PC-3 (cell line): ENCODE measurements at regions of chr15 and their contacts with region 1.

Region 1: DNA sequence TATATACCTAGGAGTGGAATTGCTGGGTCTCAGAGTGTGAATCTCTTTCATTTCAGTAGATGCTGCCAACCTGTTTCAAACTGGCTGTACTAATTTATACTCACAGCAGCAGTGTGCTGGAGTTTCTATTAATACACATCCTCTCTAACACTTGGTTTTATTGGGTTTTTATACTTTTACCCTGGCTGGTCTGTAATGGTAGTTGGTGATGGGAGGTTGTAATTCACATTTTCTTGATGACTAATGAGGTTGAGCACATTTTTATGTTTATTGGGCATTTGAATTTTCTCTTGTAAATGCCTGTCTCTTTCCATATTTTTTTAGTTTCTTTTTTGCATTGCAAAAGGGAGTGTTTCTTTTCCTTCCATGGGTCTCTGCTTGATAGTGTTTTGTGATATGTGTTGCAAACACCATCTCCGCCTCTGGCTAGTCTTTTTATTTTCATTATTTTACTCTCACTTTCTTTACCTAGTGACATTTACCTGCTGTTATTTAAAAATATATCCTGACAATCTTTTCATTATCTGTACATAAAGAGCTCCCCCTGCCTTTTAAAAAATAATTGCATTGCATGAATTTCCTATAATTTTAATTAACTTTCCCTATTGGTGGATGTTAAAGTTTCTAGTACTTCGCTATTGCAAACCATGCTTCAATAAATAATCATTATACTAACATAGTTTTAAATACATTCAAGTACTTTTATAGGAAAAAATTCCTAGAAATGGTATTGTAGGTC is 49.0 kb upstream of the GCNT3 start:
- DNase-seq: no peak
- ATAC-seq: peak; percentile 35; the same call in 1 of the 2 replicates
- H3K4me3 ChIP-seq: no peak overlapping the region
- H3K27ac ChIP-seq: no peak overlapping the region
- H3K4me1 ChIP-seq: peaks cover 9% of the 10 kb centered on the region
- H3K27me3 ChIP-seq: no peaks in the 10 kb centered on the region
- CTCF ChIP-seq: peak; percentile 49; the same call in 1 of the 2 replicates

Region 2: GRCh38 chr15:59587068-59587826 is 24.6 kb after region 1 on chr15:
- CTCF ChIA-PET with region 1: no interaction called
- POLR2A ChIA-PET with region 1: interaction called, 3 read pairs
- intact Hi-C with region 1: loop called (anchors 2 kb)
- DNase-seq: peak; percentile 84
- ATAC-seq: peak; percentile 76
- H3K4me3 ChIP-seq: no peak overlapping the region
- H3K27ac ChIP-seq: peak overlapping the region; percentile 69
- H3K4me1 ChIP-seq: peaks cover 8% of the 10 kb centered on the region
- H3K27me3 ChIP-seq: no peaks in the 10 kb centered on the region
- CTCF ChIP-seq: no peak

Region 3: GRCh38 chr15:59611276-59612260 is 49.0 kb after region 1 on chr15 and contains the start of gene GCNT3:
- CTCF ChIA-PET with region 1: no interaction called
- POLR2A ChIA-PET with region 1: interaction called, 11 read pairs
- intact Hi-C with region 1: no loop called
- DNase-seq: peak; percentile 70
- ATAC-seq: peak; percentile 83
- H3K4me3 ChIP-seq: peak within 1 kb of the TSS; percentile 52; the same call in 1 of the 2 replicates
- H3K27ac ChIP-seq: peak within 1 kb of the TSS; percentile 62
- H3K4me1 ChIP-seq: peaks cover 12% of the 10 kb centered on the region
- H3K27me3 ChIP-seq: no peaks in the 10 kb centered on the region
- CTCF ChIP-seq: no peak
- total RNA-seq, gene GCNT3: 0.18 TPM in 1 of 2 replicates, not detected in the other